Astrocyte of the cerebellum (primary cell): ENCODE measurements at regions of chr14 and their contacts with region 1.

Region 1: DNA sequence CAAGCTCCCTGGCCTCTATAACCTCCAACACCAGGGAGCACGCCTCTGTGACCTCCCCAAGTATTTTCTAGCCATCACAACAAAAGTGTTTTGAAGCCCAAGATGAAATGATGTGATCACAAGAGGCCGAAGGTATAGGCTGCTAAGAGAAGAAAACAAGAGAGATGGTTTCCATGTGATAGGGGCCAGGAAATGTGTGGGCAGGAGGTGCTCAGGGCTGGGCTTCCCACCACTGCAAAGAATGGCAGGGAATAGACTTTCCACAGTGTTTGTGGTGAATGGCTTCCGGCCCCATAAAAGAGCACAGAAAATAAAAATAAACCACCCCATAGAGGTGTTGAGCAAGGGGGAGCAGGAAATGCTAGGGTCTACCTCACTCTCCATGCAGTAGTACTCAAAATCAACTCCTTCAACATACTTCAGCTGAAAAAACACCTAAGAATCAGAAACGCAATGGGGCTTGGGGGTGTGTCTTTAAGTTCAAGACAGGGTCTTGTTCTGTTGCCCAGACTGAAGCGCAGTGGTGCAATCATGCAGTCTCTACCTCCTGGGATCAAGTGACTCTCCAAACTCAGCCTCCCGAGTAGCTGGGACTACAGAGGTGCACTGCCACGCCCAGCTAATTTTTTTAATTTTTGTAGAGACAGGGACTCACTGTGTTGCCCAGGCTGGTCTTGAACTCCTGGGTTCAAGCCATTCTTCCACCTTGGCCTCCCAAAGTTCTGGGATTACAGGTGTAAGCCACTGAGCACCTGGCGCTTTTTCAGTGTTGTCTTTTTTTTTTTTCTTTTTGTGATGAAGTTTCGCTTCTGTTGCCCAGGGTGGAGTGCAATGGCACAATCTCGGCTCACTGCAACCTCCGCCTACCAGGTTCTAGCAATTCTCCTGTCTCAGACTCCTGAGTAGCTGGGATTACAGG is 27.1 kb downstream of the DAD1 start:
- DNase-seq: no peak
- H3K4me3 ChIP-seq: no peak overlapping the region
- CTCF ChIP-seq: no peak

Region 2: DNA sequence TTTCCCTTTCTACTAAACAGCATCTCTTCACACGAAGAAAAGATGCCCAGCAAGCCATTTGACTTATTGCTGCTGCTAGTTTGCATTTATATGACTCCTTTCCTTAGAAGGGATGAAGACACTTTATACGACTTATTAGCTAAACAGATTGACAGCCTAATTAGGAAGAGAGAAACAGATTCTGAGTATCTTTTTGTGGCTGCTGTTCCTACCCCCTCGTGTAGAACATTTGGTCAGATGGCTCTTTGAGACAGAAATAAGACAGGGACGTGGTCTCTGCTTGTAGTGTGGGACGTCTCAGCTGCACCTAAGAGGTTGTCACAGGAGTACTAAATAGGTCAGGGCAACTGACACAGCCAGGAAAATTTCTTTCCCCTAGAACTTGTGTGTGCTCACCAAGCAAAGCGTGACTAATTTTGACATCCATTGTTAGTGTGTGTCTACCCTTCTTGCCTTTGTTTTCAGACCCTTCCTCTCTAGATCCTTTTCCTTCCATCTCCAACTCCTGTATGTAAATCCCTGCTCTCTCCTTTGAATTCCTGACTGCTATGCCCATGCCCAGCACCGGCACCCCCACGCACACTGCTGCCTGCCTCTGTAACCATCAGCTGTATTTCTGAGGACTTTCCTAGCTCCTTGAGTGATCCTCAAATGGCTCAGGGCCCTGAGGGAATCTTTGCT is 56.1 kb before region 1 on chr14:
- in situ Hi-C with region 1: loop called (anchors 5 kb)
- DNase-seq: no peak
- H3K4me3 ChIP-seq: no peak overlapping the region
- CTCF ChIP-seq: no peak

Region 3: DNA sequence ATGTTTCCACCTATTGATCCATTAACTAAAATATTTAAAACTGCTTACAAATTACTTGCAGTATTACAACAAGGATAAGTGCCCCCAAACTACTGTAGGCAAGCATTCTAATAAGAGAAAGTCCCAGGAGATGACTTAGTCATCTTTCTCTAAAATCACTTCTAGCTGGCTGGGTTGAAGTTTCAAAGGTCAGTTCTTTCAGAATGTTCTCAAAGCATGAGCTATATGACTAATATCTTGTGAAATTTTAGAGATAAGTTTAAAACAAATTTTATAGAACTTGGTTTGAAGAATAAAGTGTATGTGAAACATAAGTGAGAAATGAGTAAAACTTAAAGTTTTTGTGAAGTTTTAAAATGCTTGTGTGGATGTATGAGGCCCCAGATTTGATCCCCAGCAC is 106.5 kb after region 1 on chr14:
- in situ Hi-C with region 1: loop called (anchors 5 kb)
- DNase-seq: no peak
- H3K4me3 ChIP-seq: no peak overlapping the region
- CTCF ChIP-seq: no peak